ENCODE measurements at regions of chr1 and their contacts with region 1.

Region 1: DNA sequence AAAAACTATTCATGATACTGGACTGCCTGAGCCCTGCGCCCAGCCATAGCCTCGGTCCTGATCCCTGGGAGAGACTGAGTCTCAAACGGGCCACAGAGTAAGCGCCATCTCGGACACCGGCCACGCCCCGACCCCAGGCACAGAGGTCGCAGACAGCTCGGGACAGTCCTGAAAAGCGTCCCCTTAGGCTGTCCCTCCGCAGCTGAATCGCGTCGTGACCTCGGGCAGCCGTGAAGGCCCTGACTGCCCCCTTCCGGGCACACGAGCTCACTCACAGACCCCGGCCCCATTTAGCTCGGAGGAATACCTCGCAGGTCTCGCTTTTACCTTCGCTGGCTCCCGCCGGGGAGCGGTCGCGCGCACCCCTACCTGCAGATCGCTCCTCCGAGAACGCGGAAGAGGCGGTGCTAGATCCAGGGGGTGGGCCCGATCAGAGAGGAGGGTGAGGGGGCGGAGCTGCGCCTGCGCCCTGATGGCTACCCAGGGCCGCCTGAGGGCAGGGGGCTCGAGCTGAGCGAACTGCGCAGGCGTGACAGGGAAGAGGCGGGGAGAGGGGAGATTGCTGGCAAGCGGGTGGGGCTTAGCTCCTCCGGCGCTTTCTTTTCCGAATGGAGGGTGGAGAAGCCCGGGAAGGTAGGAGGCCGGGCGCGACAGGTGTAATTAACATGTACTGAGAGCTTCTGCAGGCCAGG is at the start of gene MKNK1:
- H3K4me3 ChIP-seq: peak within 1 kb of the TSS; percentile 95
- H3K27ac ChIP-seq: no peak within 1 kb of the TSS
- H3K4me1 ChIP-seq: peaks cover 2% of the 10 kb centered on the region; the same call in 1 of the 2 replicates
- CTCF ChIP-seq: peak; percentile 47; the same call in 1 of the 2 replicates

Region 2: GRCh38 chr1:46569884-46570725 is 33.9 kb before region 1 on chr1:
- CTCF ChIA-PET with region 1: no interaction called
- POLR2A ChIA-PET with region 1: no interaction called
- H3K4me3 ChIP-seq: no peak overlapping the region
- H3K27ac ChIP-seq: no peak overlapping the region
- H3K4me1 ChIP-seq: peaks cover 1% of the 10 kb centered on the region; the same call in 1 of the 2 replicates
- CTCF ChIP-seq: no peak

Region 3: GRCh38 chr1:46616277-46617107 is 12.5 kb after region 1 on chr1 and contains the start of gene MOB3C:
- CTCF ChIA-PET with region 1: interaction called, 4 read pairs
- POLR2A ChIA-PET with region 1: interaction called, 77 read pairs
- H3K4me3 ChIP-seq: peak within 1 kb of the TSS; percentile 59
- H3K27ac ChIP-seq: peak within 1 kb of the TSS; percentile 16; the same call in 1 of the 2 replicates
- H3K4me1 ChIP-seq: no peaks in the 10 kb centered on the region
- CTCF ChIP-seq: no peak

Region 4: DNA sequence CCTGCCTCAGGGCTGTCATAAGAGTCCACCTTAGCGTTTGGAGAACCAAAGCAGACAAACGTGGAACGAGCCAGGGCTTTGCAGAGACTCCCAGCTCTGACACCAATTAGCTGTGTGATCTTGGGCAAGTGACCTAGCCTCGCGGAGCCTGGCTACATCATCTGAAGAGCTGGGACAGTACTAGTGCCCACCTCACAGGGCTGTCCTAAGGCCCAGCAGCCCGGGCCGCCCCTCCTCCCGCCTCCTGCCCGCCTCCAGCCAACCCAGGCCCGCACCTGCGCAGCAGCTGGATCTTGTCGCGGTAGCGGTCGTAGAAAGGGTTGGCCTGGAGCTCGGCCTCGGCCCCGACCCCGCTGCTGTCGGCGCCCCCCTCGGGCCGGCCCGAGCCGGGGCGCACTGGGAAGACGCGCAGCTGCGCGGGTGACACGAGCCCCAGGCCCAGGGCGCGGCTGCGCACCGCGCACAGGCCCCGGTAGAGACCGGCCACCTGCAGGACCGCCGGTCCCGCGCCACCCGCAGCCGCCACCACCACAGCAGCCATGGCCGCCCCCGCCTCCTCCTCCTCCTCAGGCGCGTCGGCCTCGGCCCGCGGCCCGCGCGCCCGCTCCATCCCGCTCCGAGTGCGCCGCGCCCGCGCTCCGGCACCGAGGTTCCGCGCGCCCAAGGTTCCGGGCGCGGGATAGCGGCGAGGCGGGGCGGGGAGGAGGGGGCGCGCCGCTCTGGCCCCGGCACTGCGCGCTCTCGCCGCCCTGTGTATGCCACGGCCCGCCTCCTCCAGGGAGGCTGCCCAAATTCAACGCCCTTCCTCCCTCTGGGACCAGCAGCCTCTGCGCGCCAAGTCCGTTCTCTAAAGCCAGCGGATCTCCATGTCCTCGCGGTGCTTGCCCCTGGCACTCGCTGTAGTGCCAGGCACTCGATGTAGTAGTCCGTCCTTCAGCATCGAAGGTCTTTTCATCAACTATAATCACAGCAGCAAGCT is 64.1 kb after region 1 on chr1 and contains the start of gene ATPAF1:
- CTCF ChIA-PET with region 1: no interaction called
- POLR2A ChIA-PET with region 1: interaction called, 16 read pairs
- H3K4me3 ChIP-seq: peak within 1 kb of the TSS; percentile 66
- H3K27ac ChIP-seq: peak within 1 kb of the TSS; percentile 74; the same call in 1 of the 2 replicates
- H3K4me1 ChIP-seq: no peaks in the 10 kb centered on the region
- CTCF ChIP-seq: no peak

Measured in HEK293 (cell line).